A549 (cell line): ENCODE measurements at regions of chr5 and their contacts with region 1.

Region 1: GRCh38 chr5:170819824-170820223 is 36.3 kb downstream of the GABRP start:
- DNase-seq: no peak
- ATAC-seq: no peak
- H3K4me3 ChIP-seq: no peak overlapping the region
- H3K27ac ChIP-seq: no peak overlapping the region
- H3K4me1 ChIP-seq: no peaks in the 10 kb centered on the region
- CTCF ChIP-seq: no peak
- EP300 ChIP-seq: no peak
- POLR2A ChIP-seq: no peak
- RAD21 ChIP-seq: no peak

Region 2: DNA sequence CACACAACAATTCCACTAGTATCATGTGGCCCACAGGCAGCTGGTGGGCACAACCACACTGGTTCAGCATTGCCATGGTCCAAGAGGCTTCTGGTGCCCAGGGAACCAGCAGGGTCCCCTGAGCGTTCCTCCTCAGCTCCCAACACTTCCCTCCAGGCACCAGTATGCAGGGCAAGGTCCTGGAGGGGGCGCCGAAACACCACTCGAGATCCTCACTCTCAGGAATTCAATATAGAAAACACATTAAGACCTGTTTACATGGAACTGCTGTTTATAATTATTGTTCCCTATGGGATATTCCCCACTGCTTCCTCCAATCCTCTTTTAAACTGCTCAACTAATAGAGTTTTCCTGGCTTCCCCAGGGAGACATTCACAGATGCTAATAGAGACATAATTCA is 128.2 kb before region 1 on chr5:
- CTCF ChIA-PET with region 1: no interaction called
- POLR2A ChIA-PET with region 1: no interaction called
- DNase-seq: no peak
- ATAC-seq: peak in 1 of 2 experiments; percentile 49; a peak in 2 of 6 replicates
- H3K4me3 ChIP-seq: no peak overlapping the region
- H3K27ac ChIP-seq: no peak overlapping the region
- H3K4me1 ChIP-seq: no peaks in the 10 kb centered on the region
- CTCF ChIP-seq: no peak
- EP300 ChIP-seq: no peak
- POLR2A ChIP-seq: no peak
- RAD21 ChIP-seq: no peak

Region 3: DNA sequence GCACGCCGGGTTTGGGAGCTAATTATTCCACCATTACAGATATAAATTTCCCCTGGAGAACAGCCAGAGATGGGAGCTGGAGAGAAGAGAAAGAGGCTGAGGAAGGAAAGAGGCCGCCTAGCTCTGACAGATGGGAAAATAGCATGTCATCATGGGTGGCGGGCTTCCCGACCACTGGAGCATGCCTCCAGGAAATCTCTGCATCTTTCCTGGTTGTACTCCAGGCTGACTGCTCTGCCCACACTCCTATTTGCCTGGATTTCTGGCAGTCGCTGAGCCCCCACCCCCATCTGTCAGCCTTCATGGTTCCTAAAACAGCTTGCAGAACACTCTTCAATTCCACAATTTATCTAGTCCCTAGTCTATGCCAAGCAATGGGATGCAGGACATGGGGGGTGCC is 50.6 kb before region 1 on chr5:
- CTCF ChIA-PET with region 1: no interaction called
- POLR2A ChIA-PET with region 1: no interaction called
- DNase-seq: no peak
- ATAC-seq: no peak
- H3K4me3 ChIP-seq: no peak overlapping the region
- H3K27ac ChIP-seq: no peak overlapping the region
- H3K4me1 ChIP-seq: no peaks in the 10 kb centered on the region
- CTCF ChIP-seq: no peak
- EP300 ChIP-seq: no peak
- POLR2A ChIP-seq: no peak
- RAD21 ChIP-seq: no peak

Region 4: GRCh38 chr5:170809551-170809950 is 10.3 kb before region 1 on chr5:
- CTCF ChIA-PET with region 1: interaction called, 16 read pairs
- POLR2A ChIA-PET with region 1: no interaction called
- DNase-seq: peak; percentile 63 to 66
- ATAC-seq: peak; percentile 97
- H3K4me3 ChIP-seq: no peak overlapping the region
- H3K27ac ChIP-seq: no peak overlapping the region
- H3K4me1 ChIP-seq: no peaks in the 10 kb centered on the region
- CTCF ChIP-seq: peak; percentile 60
- EP300 ChIP-seq: no peak
- POLR2A ChIP-seq: no peak
- RAD21 ChIP-seq: peak; percentile 78 to 81